CD4-positive, alpha-beta T cell (primary cell): ENCODE measurements at regions of chr14 and their contacts with region 1.

Region 1: DNA sequence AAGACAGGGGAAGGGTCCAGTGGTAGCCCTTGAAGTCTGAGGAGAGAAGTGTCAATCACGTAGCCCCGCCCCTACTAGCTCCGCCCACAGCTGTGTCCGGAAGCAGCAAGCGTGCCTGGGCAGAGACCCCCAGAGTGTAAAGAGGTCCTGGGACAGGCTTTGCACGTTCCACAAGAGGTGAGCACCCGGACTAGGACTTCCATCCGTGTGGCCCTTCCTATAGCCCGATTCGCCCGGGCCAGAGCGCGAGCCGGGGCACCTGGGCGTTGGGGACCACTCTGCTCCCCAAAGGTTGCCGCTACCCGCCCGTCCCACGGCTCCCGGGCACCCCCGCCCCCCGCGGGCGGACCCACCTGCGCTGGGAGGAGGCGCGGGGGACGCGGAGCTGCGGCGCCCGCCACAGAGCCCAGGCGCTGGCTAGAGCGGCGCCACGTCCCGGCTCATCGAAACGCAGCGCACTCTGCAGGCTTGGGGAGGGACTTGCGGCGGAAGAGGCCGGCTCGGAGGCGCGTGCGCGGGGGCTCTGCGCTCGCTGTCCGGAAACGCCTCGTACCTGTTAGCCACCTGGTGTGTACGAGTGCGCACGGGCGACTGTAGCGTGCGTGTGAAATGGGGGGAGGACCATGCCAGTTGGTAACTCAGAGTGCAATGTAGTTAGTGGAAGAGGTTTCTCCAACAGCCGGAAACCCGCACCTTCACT is at the start of gene RABGGTA:
- DNase-seq: peak; percentile 84 to 99 (median 92)
- ATAC-seq: peak; percentile 83
- H3K4me3 ChIP-seq: peak within 1 kb of the TSS; percentile 86
- H3K4me3 Mint-ChIP-seq: peak within 1 kb of the TSS; percentile 96
- H3K27ac ChIP-seq: peak within 1 kb of the TSS; percentile 92 to 95
- H3K27ac Mint-ChIP-seq: peak within 1 kb of the TSS; percentile 97
- H3K4me1 ChIP-seq: peaks cover 43% of the 10 kb centered on the region
- H3K4me1 Mint-ChIP-seq: peaks cover 40% of the 10 kb centered on the region
- H3K27me3 ChIP-seq: no peaks in the 10 kb centered on the region
- H3K27me3 Mint-ChIP-seq: no peaks in the 10 kb centered on the region
- CTCF ChIP-seq: peak; percentile 75
- total RNA-seq, gene RABGGTA: 52.3 to 55.2 TPM

Region 2: DNA sequence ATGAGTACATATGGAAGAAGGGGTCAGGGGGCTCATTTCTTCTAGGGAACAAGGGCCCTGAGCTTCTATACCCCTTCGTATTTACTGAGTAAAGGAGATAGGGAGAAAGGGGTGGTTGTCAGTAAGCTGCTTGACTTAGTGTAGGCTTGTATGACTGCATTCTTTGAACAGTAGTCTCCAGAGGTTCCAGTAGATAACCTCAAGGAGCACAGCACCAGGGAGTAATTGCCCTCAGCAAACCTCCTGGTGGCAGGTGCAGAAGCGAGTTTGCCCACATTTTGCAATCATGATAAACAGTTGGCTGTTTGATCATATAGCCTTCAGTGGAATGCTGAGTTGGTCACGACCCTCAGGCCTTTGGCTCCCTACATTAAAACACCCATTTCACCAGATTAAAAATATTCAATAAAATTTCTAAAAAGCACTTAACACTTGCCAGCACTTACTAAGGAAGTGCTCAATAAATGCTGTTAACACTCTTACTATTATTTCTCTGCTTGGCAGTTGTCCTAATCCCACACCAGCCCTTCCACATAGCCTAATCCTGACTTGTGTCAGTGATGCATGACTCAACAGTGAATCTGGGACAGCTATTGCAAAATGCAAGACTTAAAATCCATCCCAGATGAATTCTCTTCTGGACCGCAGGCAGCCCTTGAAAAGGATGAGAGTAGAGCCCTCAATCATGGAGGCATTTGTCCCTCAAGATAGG is 286.2 kb before region 1 on chr14:
- CTCF ChIA-PET with region 1: no interaction called
- POLR2A ChIA-PET with region 1: no interaction called
- intact Hi-C with region 1: no loop called
- DNase-seq: no peak
- ATAC-seq: no peak
- H3K4me3 ChIP-seq: no peak overlapping the region
- H3K4me3 Mint-ChIP-seq: no peak overlapping the region
- H3K27ac ChIP-seq: no peak overlapping the region
- H3K27ac Mint-ChIP-seq: no peak overlapping the region
- H3K4me1 ChIP-seq: peaks cover 15% of the 10 kb centered on the region
- H3K4me1 Mint-ChIP-seq: peaks cover 18% of the 10 kb centered on the region
- H3K27me3 ChIP-seq: no peaks in the 10 kb centered on the region
- H3K27me3 Mint-ChIP-seq: no peaks in the 10 kb centered on the region
- CTCF ChIP-seq: no peak

Region 3: DNA sequence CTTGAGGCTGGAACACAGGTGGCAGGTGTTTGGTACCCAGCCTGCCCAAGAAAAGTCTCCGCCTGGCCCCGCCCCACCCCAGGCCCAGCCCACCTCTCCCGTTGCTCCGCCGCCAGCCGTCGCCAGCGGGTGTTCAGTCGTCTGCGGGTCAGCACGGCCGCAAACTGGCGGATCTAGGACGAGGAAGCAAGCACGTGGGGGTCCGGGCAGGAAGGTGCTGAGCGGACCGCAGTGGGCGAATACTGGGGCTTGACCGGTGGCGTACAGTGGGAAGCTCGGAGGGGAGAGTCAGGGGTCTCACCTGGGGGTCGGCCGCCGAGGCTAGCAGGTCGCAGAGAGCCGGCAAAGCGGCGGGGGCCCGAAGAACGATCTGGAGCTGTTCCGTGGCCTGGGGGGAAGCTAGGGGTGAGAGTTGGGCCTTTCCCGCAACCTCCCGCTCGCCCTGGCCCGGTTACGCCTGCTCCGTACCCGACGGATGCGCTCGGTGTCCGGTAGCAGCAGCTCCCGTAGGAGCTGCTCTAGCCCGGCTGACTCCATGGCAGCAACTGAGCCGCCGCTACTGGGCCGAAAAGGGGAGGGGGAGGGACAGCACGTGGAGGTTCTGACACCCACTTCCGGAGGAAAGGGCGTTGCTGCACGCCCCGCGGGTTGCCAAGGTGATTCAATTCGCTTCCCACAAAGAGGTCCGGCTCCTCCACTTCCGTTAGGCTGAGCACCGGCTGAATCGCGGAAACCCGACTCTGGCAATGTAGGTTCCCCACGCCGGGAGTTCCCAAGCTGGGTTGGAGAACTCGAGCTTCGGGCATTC is 82.8 kb before region 1 on chr14 and contains the start of gene IPO4:
- CTCF ChIA-PET with region 1: interaction called, 3 read pairs
- POLR2A ChIA-PET with region 1: interaction called, 10 read pairs
- intact Hi-C with region 1: no loop called
- DNase-seq: peak; percentile 86 to 98 (median 94)
- ATAC-seq: peak; percentile 91
- H3K4me3 ChIP-seq: peak within 1 kb of the TSS; percentile 75
- H3K4me3 Mint-ChIP-seq: peak within 1 kb of the TSS; percentile 93
- H3K27ac ChIP-seq: peak within 1 kb of the TSS; percentile 70 to 88
- H3K27ac Mint-ChIP-seq: peak within 1 kb of the TSS; percentile 91
- H3K4me1 ChIP-seq: peaks cover 32% of the 10 kb centered on the region
- H3K4me1 Mint-ChIP-seq: peaks cover 45% of the 10 kb centered on the region
- H3K27me3 ChIP-seq: no peaks in the 10 kb centered on the region
- H3K27me3 Mint-ChIP-seq: no peaks in the 10 kb centered on the region
- CTCF ChIP-seq: no peak
- total RNA-seq, gene IPO4: 36.6 to 37.9 TPM

Region 4: DNA sequence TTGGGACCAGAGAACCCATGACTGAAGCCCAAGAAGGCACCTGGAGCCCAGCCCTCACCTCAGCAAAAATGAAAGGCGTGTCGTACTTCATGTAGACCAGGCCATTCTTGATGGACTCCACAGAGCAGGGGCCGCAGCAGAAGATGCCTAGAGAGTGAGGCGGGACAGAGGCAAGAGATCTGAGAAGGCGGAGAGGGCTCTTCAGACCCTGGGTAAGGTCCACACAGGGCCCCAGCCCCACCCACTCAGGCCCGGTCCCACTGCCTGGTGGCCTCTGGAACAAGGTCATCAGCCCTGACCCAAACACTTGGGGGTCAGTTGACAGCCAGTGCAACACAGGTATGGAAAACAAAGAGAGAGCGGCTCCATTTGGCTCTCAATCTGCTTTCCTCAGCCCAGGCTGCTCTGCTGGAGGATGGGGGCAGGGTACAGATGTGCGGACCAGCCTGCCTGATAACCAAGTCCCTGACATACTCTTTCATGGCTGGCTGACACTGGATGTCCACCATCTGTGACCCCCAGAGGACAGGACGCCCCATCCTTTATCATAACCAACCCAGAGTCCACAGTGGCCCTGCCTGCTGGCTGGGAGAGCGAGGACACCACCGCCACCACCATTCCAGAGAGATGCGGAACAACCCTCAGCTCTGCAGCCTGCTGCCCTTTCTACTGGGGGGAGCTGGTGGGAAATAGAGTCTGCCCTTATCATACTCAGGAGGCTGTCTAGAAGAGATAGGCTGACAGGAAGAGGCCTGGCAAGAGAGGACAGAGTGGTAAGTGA is 15.2 kb before region 1 on chr14:
- CTCF ChIA-PET with region 1: no interaction called
- POLR2A ChIA-PET with region 1: no interaction called
- intact Hi-C with region 1: no loop called
- DNase-seq: no peak
- ATAC-seq: no peak
- H3K4me3 ChIP-seq: no peak overlapping the region
- H3K4me3 Mint-ChIP-seq: no peak overlapping the region
- H3K27ac ChIP-seq: no peak overlapping the region
- H3K27ac Mint-ChIP-seq: no peak overlapping the region
- H3K4me1 ChIP-seq: no peaks in the 10 kb centered on the region
- H3K4me1 Mint-ChIP-seq: no peaks in the 10 kb centered on the region
- H3K27me3 ChIP-seq: no peaks in the 10 kb centered on the region
- H3K27me3 Mint-ChIP-seq: no peaks in the 10 kb centered on the region
- CTCF ChIP-seq: no peak

Region 5: GRCh38 chr14:24310646-24311604 is 39.6 kb after region 1 on chr14 and contains the start of gene LTB4R:
- CTCF ChIA-PET with region 1: interaction called, 10 read pairs
- POLR2A ChIA-PET with region 1: interaction called, 9 read pairs
- intact Hi-C with region 1: loop called in 1 of 2 experiments (anchors 5 kb)
- DNase-seq: peak; percentile 47 to 91 (median 61)
- ATAC-seq: peak; percentile 81
- H3K4me3 ChIP-seq: peak within 1 kb of the TSS; percentile 65
- H3K4me3 Mint-ChIP-seq: peak within 1 kb of the TSS; percentile 88
- H3K27ac ChIP-seq: peak within 1 kb of the TSS; percentile 59 to 73
- H3K27ac Mint-ChIP-seq: peak within 1 kb of the TSS; percentile 76
- H3K4me1 ChIP-seq: peaks cover 80% of the 10 kb centered on the region
- H3K4me1 Mint-ChIP-seq: peaks cover 80% of the 10 kb centered on the region
- H3K27me3 ChIP-seq: no peaks in the 10 kb centered on the region
- H3K27me3 Mint-ChIP-seq: no peaks in the 10 kb centered on the region
- CTCF ChIP-seq: peak; percentile 45
- total RNA-seq, gene LTB4R: 15.6 to 18.3 TPM